ENCODE measurements at regions of chr7 and their contacts with region 1.

Region 1: DNA sequence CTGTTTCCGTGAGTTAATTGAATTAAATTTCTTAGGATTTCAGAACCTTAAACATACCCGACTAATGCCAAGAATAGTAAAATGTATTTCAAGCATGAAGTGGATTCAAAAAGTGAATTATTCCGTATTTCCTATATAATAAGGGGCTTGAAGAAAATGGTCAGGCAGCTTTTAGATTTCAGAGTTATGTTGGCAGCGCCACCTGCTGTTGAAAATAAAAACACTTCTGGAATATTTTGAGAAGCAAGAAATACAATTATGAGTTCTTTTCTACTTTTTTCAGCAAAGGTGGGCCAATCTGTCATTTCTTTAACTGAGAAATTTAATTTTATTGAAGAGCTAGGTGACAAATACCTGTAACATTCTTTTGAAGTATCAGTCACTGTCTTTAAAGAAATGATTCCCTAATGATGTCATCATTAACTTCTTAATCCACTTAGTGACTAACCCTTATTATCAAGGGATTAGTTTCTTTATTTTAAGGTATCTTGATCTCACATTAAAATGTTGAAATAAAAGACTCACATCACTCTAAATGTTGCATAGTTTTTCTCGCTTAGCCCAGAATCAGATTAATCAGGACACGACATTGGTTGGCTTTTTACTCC is 36.6 kb upstream of the AGR3 start:
- DNase-seq: peak; percentile 23 to 59 (median 30)
- ATAC-seq: 0 out of 3 replicates have a peak, but pooled peaks have one; percentile 29
- H3K4me3 ChIP-seq: no peak overlapping the region
- H3K27ac ChIP-seq: no peak overlapping the region
- H3K4me1 ChIP-seq: no peaks in the 10 kb centered on the region
- H3K27me3 ChIP-seq: no peaks in the 10 kb centered on the region
- CTCF ChIP-seq: peak; percentile 40 to 72 (median 46); a peak in 5 of 6 replicates
- EP300 ChIP-seq: no peak
- POLR2A ChIP-seq: no peak
- RAD21 ChIP-seq: peak; percentile 82 to 88

Region 2: GRCh38 chr7:16083931-16084330 is 834.5 kb before region 1 on chr7:
- CTCF ChIA-PET with region 1: no interaction called
- POLR2A ChIA-PET with region 1: no interaction called
- in situ Hi-C with region 1: loop called (anchors 10 kb)
- intact Hi-C with region 1: loop called (anchors 5 kb)
- DNase-seq: no peak
- ATAC-seq: no peak
- H3K4me3 ChIP-seq: no peak overlapping the region
- H3K27ac ChIP-seq: no peak overlapping the region
- H3K4me1 ChIP-seq: 0 out of 5 replicates have a peak, but pooled peaks cover 0 to 3% of the 10 kb centered on the region in 2 experiments
- H3K27me3 ChIP-seq: no peaks in the 10 kb centered on the region
- CTCF ChIP-seq: no peak
- EP300 ChIP-seq: no peak
- POLR2A ChIP-seq: no peak
- RAD21 ChIP-seq: no peak

Region 3: DNA sequence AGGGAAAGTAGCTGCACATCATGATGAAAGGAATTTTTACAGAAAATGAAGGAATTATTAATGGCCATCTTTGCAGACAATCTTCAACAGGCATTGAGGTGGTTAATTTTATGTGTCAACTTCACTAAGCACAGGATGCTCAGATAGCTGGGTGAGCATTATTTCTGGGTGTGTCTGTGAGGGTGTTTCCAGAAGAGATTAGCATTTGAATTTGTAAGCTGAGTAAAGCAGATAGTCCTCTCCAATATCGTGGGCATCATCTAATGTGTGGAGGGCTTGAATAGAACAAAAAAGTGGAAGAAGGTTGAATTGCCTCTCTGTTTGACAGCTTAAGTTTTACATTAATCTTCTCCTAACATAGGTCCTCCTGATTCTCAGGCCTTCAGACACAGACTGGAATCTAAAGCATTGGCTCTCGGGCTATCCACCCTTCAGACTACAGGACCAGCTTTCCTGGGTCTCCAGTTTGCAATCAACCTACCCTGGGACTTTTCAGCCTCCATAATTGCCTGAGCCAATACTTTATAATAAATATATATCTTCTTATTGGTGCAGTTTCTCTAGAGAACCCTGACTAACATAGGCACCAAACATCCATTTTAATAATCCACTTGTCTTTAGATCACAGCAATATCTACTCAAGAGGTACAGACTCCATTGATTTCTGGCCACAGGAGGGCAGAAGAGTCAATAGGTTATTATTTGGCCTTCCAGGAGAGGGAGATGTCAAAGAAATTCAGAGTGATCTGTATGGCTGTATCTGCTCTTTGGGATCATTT is 486.6 kb before region 1 on chr7:
- CTCF ChIA-PET with region 1: no interaction called
- POLR2A ChIA-PET with region 1: no interaction called
- in situ Hi-C with region 1: no loop called
- intact Hi-C with region 1: loop called (anchors 2 kb)
- DNase-seq: peak; percentile 36 to 77 (median 50)
- ATAC-seq: peak; percentile 92
- H3K4me3 ChIP-seq: no peak overlapping the region
- H3K27ac ChIP-seq: no peak overlapping the region
- H3K4me1 ChIP-seq: peaks cover 0 to 37% of the 10 kb centered on the region in 2 experiments; a peak in 4 of 5 replicates
- H3K27me3 ChIP-seq: no peaks in the 10 kb centered on the region
- CTCF ChIP-seq: peak; percentile 71 to 96 (median 89)
- EP300 ChIP-seq: no peak; the same call in 1 of the 2 replicates
- POLR2A ChIP-seq: no peak
- RAD21 ChIP-seq: peak; percentile 84 to 92

Region 4: DNA sequence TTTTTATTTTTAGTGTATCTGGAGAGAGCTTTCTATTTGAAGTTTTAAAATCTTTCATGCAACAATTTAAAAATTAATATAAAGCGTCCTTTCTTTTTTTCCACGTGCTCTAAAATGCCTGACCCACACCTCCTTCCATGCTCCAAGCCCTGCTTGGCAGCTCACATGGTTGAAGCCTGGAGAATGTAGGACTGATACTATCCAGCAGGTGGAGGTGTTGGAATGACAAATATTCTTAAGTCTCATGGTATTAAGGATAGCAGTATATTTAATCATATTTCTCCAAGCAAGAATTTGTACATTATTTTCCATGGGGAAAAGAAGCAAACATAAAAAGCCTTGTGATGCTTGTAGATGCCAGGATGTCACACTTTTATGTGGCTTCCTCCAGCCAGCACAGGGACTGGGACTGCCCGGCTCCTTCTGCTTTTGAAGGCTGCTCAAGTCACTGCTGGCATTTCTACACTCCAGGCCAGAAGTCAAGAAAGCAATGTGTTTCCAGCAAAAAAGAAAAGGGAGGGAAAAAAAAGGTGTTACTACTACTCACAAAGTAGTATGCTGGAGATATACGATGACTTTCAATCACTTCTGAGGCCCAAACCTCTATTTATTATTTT is 222.7 kb before region 1 on chr7:
- CTCF ChIA-PET with region 1: interaction called, 32 read pairs
- POLR2A ChIA-PET with region 1: no interaction called
- in situ Hi-C with region 1: loop called (anchors 5 kb)
- intact Hi-C with region 1: loop called (anchors 2 kb)
- DNase-seq: peak; percentile 35 to 63 (median 46)
- ATAC-seq: peak; percentile 94
- H3K4me3 ChIP-seq: no peak overlapping the region
- H3K27ac ChIP-seq: no peak overlapping the region
- H3K4me1 ChIP-seq: no peaks in the 10 kb centered on the region
- H3K27me3 ChIP-seq: no peaks in the 10 kb centered on the region
- CTCF ChIP-seq: peak; percentile 46 to 69 (median 59)
- EP300 ChIP-seq: no peak
- POLR2A ChIP-seq: no peak
- RAD21 ChIP-seq: peak; percentile 65 to 67

Region 5: DNA sequence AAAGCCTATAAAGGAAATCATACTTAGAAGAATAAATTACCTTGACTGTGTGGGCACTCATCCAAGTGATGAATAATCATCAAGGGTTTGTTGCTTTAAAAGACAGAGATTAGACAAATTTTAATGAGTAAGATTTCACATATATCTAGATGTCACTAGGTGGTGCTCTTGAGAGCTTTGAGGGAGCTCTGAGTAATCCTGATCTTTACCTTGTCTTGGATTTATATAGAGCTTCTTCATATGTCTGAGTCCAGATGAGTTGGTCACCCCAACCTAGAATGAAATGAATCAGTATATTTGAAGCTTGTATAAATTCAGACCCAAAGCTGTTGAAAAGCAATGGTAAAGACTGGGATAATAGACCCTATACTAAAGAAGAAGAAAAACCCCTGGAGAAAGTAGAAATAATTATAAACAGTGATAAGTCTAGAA is 117.3 kb before region 1 on chr7:
- CTCF ChIA-PET with region 1: interaction called, 4 read pairs
- POLR2A ChIA-PET with region 1: no interaction called
- in situ Hi-C with region 1: no loop called
- intact Hi-C with region 1: loop called (anchors 1 kb)
- DNase-seq: peak; percentile 15 to 66 (median 38)
- ATAC-seq: peak; percentile 88
- H3K4me3 ChIP-seq: no peak overlapping the region
- H3K27ac ChIP-seq: no peak overlapping the region
- H3K4me1 ChIP-seq: peaks cover 0 to 3% of the 10 kb centered on the region in 2 experiments; a peak in 1 of 5 replicates
- H3K27me3 ChIP-seq: peaks cover 0 to 8% of the 10 kb centered on the region in 2 experiments; a peak in 3 of 5 replicates
- CTCF ChIP-seq: peak in 2 of 3 experiments; percentile 39 to 66; a peak in 4 of 6 replicates
- EP300 ChIP-seq: no peak
- POLR2A ChIP-seq: no peak
- RAD21 ChIP-seq: peak; percentile 59 to 69

Measured in K562 (cell line).